Astrocyte of the cerebellum (primary cell): ENCODE measurements at regions of chr17 and their contacts with region 1.

Region 1: DNA sequence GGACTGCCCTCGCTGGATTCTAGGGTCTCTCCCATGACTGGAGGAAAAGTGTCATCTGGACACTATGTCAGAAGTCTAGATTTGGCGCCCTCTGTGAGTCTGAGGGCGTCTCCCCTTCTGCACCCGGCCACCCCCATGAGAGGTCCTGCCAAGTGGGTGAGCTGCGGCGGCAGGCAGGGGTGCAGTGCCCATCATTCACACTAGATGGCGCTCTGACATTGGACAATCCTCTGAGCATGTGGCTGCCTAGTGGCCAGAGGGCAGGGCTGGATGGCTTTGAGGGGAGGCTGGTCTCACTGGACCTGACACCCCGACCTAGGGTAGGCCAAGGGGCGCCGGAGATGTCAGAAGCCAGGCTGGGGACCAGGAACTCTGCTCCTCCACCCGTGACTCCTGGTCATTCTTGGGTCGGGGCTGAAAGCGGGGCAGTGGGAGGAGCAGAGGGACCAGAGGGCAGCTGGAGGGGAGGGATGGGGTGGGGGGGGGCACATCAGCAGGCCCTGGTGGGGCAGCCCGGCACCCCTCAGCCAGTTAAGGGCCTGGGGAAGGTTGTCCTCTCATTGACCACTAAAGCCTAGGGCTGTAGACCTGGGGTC is 28.0 kb downstream of the MRM1 start:
- DNase-seq: peak; percentile 31
- H3K4me3 ChIP-seq: no peak overlapping the region
- CTCF ChIP-seq: peak; percentile 95

Region 2: DNA sequence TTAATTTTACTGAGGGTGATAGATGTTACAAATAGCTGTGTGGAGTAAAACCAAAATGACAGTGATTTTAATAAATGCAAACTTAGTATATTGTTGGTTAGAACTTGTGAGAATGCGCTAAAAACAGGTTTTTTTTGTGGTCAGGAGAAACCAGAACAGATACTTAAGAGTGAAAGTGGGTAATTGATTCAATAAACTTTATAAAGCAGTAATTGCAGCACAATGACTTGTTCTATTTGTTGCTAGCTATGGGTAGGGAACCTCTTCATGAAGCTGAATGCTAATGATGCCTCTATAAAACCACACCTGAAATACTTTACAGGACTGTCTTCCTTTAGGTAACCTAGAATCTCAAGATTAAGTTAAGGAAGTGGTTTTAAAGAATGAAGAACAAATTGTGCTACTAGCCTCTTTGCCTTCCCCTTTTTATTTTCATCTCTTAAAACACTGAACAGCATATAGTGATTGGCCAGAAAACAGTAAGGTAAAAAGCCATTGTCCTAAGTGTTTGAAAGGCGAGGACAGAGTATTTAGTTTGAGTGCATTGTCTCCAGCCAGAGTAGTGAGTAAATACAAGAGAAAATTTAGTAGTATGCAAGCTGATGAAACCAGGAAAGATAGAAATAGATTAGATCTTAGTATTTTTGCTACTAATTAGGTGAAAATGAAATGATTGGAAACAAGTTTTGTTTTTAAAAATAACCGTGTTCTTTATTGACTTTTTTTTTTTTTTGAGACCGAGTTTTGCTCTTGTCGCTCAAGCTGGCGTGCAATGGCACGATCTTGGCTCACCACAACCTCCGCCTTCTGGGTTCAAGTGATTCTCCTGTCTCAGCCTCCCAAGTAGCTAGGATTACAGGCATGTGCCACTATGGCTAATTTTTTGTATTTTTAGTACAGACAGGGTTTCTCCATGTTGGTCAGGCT is 78.6 kb before region 1 on chr17:
- in situ Hi-C with region 1: no loop called
- DNase-seq: no peak
- H3K4me3 ChIP-seq: no peak overlapping the region
- CTCF ChIP-seq: no peak

Region 3: GRCh38 chr17:37067555-37068111 is 438.3 kb after region 1 on chr17:
- in situ Hi-C with region 1: loop called (anchors 25 kb)
- DNase-seq: peak; percentile 47
- H3K4me3 ChIP-seq: no peak overlapping the region
- CTCF ChIP-seq: no peak